Prostate gland (tissue), 2 donors: ENCODE measurements at regions of chr7 and their contacts with region 1.

Region 1: GRCh38 chr7:73522105-73522872 is at the start of gene BAZ1B:
- DNase-seq: peak; percentile 97
- H3K4me3 ChIP-seq: peak within 1 kb of the TSS; percentile 65 to 94
- H3K27ac ChIP-seq: peak within 1 kb of the TSS; percentile 86 to 93
- H3K4me1 ChIP-seq: peaks cover 9% of the 10 kb centered on the region
- H3K27me3 ChIP-seq: no peaks in the 10 kb centered on the region
- CTCF ChIP-seq: peak in 2 of 4 experiments; percentile 18 to 33
- POLR2A ChIP-seq: peak; percentile 67
- total RNA-seq, gene BAZ1B: 43.4 to 56.4 TPM

Region 2: GRCh38 chr7:73557108-73557396 is 34.8 kb after region 1 on chr7:
- intact Hi-C with region 1: loop called (anchors 1 kb)
- DNase-seq: peak; percentile 91
- H3K4me3 ChIP-seq: peak overlapping the region; percentile 92 to 97
- H3K27ac ChIP-seq: peak overlapping the region; percentile 98 to 100
- H3K4me1 ChIP-seq: no peaks in the 10 kb centered on the region
- H3K27me3 ChIP-seq: no peaks in the 10 kb centered on the region
- CTCF ChIP-seq: peak in 1 of 4 experiments; percentile 13
- POLR2A ChIP-seq: no peak